ENCODE measurements at regions of chr1 and their contacts with region 1.

Region 1: DNA sequence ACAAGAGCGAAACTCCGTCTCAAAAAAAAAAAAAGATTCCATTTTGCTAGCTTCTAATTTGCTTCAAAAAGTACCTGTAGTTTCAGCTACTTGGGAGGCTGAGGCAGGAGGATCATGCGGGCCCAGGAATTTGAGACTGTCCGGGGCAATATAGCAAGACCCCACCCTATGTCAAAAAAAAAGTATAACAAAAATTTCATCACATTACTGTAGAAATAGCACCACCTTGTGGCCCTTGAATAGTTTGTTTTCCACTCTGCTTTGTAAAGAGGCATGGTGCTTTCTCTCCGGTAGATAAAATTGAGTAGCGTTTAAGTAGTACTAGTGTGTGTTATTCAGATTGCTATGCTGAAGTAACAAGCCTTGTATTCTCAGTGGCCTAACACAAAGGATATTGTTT is 18.2 kb upstream of the MSTO1 start:
- DNase-seq: no peak
- H3K4me3 ChIP-seq: no peak overlapping the region
- H3K27ac ChIP-seq: no peak overlapping the region
- H3K4me1 ChIP-seq: peaks cover 0 to 4% (median 0%) of the 10 kb centered on the region in 6 donors
- H3K27me3 ChIP-seq: no peaks in the 10 kb centered on the region
- CTCF ChIP-seq: peak; percentile 32 to 77 (median 62)
- POLR2A ChIP-seq: no peak

Region 2: DNA sequence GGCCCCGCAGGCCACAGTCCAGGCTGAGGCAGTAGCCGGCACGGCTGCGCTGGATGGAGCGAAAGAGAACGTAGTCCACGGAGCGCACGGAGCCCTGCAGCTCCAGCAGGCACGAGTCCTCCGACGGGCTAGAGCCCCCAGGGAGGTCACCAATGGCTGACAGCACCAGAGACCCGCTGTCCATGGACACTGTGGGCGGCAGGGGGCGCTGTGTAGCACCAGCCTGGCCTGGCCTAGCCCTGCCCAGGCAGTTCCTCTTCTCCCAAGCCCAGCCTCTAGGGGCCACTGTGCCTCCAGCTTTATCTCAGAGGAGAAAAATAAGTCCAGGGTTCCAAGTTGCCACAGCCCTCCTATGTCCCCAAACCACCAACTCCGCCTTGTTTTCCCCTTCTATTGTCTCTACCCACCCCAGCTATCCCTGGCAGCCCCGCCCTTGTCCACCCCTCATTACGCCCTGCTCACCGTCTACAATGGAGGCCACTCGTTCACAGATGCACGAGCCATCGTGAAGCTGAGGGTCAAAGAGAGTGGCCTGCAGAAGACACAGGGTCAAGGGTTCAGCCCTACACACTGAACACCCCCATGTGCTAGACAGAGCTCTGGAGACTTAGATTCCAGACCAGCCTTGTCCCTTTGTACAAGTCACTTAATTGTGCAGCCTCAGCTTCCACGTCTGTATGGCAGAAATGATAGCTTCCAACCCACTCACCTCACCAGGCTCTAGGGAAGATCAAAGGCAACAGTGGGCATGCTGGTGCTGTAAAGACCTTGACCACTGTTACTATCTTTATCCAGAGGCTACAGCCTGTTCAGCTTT is 340.9 kb before region 1 on chr1:
- intact Hi-C with region 1: loop called (anchors 5 kb)
- DNase-seq: peak; percentile 99
- H3K4me3 ChIP-seq: peak overlapping the region; percentile 6 to 66 (median 34)
- H3K27ac ChIP-seq: peak overlapping the region in 7 of 8 donors; percentile 23 to 79 (median 51)
- H3K4me1 ChIP-seq: peaks cover 18 to 46% (median 33%) of the 10 kb centered on the region in 6 donors
- H3K27me3 ChIP-seq: no peaks in the 10 kb centered on the region
- CTCF ChIP-seq: peak; percentile 97 to 100 (median 100)
- POLR2A ChIP-seq: no peak

Region 3: DNA sequence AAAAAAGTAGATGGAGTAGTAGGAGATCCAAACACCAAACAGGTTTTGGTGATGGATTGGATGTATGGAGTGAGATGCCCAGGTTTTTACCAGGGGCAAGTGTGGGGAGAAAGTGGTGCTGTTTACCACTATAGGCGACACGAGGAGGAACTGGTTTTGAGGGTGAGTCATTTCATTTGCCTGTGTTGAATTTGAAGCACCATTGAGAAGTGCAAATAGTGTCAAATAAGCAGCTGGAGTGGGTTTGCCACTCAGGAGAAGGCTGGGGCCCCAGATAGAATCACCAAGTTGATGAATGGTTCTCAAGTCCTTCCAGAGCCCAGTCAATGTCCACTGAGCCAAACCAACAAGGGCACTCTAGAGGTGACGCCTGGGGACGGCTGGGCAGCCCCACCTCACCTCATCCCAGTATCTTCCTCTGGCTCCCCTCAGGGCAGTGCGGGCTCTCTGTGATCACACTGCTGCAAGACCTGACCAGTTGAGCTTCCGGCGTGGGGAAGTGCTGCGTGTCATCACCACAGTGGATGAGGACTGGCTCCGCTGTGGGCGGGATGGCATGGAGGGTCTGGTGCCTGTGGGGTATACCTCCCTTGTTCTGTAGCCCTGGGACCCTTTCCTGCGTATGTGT is 261.7 kb before region 1 on chr1:
- intact Hi-C with region 1: no loop called
- DNase-seq: no peak
- H3K4me3 ChIP-seq: no peak overlapping the region
- H3K27ac ChIP-seq: peak overlapping the region in 1 of 8 donors; percentile 4
- H3K4me1 ChIP-seq: peaks cover 0 to 29% (median 8%) of the 10 kb centered on the region in 6 donors
- H3K27me3 ChIP-seq: no peaks in the 10 kb centered on the region
- CTCF ChIP-seq: no peak
- POLR2A ChIP-seq: no peak